ENCODE measurements at regions of chr13 and their contacts with region 1.

Region 1: GRCh38 chr13:75876360-75877050 is 240.4 kb downstream of the LMO7 start:
- DNase-seq: peak in 1 of 3 donors; percentile 59
- ATAC-seq: peak; percentile 90 to 94 (median 92)
- H3K4me3 ChIP-seq: no peak overlapping the region
- H3K27ac ChIP-seq: no peak overlapping the region
- H3K4me1 ChIP-seq: peaks cover 0 to 10% (median 0%) of the 10 kb centered on the region in 4 donors
- H3K27me3 ChIP-seq: no peaks in the 10 kb centered on the region
- CTCF ChIP-seq: peak; percentile 79 to 90 (median 88)
- POLR2A ChIP-seq: no peak

Region 2: DNA sequence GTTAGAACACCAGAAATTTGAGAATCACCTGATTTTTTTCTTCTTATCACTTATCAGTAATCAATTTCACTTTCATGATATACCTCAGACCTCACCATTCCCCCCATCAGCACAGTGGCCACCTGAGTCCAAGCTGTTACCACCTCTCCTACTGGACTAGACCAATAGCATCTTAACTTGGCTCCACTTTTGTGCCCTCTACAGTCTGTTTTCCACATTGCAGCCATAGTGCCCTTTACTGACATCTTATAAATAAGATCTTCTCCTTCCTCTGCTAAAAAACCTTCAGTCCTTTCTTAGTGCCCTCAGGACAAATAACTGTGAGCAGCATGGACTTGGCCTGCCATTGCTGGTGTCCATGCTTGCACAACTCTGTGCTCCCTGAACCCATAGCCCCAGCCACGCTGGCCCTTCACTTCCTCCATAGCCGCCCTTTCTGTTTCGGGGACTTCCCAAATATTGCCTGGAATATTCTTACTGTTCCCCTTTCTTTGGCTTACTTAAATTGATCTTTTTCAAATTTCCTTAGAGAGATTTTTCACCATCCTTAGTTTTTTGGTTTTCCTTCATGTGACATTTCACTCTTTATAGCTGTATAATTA is 140.4 kb after region 1 on chr13:
- intact Hi-C with region 1: loop called in 1 of 2 experiments (anchors 10 kb)
- DNase-seq: peak in 1 of 3 donors; percentile 18
- ATAC-seq: peak; percentile 71 to 81 (median 74)
- H3K4me3 ChIP-seq: no peak overlapping the region
- H3K27ac ChIP-seq: no peak overlapping the region
- H3K4me1 ChIP-seq: no peaks in the 10 kb centered on the region
- H3K27me3 ChIP-seq: peaks cover 0 to 6% of the 10 kb centered on the region in 2 donors
- CTCF ChIP-seq: peak; percentile 30 to 56 (median 47)
- POLR2A ChIP-seq: no peak

Region 3: DNA sequence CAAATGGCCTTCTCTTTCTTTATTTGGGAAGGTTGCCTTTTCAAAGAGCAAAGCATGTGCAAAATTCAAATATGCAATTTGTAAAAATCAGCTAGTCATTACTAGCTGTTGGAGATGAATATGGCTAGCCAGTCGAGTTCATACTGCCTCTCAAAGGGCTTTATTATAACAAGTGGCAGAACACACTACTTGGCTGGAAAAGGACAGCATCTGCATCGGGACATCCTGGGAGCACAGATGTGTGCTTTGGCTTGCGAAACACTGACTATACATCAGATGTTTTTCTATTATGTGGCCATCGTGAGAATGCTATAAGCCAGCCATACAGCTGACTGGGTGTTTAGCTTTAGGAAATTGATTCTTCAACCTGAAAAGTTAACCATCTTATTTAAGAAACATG is 585.5 kb after region 1 on chr13:
- intact Hi-C with region 1: loop called in 1 of 2 experiments (anchors 10 kb)
- DNase-seq: no peak
- ATAC-seq: no peak
- H3K4me3 ChIP-seq: no peak overlapping the region
- H3K27ac ChIP-seq: no peak overlapping the region
- H3K4me1 ChIP-seq: no peaks in the 10 kb centered on the region
- H3K27me3 ChIP-seq: no peaks in the 10 kb centered on the region
- CTCF ChIP-seq: no peak
- POLR2A ChIP-seq: no peak

Region 4: DNA sequence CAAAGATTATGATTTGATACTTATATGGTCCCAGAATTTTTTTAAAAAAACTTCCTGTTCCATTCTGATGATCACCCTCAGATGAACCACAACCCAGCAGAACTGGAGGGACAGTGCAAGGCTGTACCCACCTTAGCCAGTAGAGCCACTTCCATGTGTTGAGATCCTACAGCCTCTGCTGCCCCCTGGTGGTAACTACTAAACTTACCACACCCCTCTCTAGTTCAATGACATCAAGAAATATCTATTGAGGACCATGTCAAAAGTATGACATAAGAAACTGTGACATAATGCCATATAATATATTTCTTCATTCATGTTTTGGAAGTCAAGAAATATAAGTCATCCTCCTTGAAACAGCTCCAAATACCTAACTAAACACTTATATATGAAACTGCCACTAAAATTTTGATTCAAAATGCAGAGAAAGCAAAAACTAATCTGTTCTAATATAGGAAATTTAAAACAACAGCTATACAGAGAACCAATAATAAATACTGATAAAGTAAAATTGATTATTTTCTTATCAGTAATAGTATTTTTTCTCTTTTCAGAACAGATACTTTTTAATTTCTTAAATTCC is 597.1 kb after region 1 on chr13:
- intact Hi-C with region 1: loop called (anchors 10 kb)
- DNase-seq: peak; percentile 33 to 79 (median 56)
- ATAC-seq: peak; percentile 97 to 99 (median 98)
- H3K4me3 ChIP-seq: no peak overlapping the region
- H3K27ac ChIP-seq: no peak overlapping the region
- H3K4me1 ChIP-seq: no peaks in the 10 kb centered on the region
- H3K27me3 ChIP-seq: no peaks in the 10 kb centered on the region
- CTCF ChIP-seq: peak; percentile 83 to 92 (median 86)
- POLR2A ChIP-seq: no peak